ENCODE measurements at regions of chr2 and their contacts with region 1.

Region 1: GRCh38 chr2:175871331-175872004 is 130.6 kb downstream of the LNPK start:
- DNase-seq: no peak
- ATAC-seq: no peak
- H3K4me3 ChIP-seq: no peak overlapping the region
- H3K27ac ChIP-seq: peak overlapping the region; percentile 64 to 80
- H3K4me1 ChIP-seq: peaks cover 4 to 8% of the 10 kb centered on the region in 2 donors
- H3K27me3 ChIP-seq: no peaks in the 10 kb centered on the region

Region 2: DNA sequence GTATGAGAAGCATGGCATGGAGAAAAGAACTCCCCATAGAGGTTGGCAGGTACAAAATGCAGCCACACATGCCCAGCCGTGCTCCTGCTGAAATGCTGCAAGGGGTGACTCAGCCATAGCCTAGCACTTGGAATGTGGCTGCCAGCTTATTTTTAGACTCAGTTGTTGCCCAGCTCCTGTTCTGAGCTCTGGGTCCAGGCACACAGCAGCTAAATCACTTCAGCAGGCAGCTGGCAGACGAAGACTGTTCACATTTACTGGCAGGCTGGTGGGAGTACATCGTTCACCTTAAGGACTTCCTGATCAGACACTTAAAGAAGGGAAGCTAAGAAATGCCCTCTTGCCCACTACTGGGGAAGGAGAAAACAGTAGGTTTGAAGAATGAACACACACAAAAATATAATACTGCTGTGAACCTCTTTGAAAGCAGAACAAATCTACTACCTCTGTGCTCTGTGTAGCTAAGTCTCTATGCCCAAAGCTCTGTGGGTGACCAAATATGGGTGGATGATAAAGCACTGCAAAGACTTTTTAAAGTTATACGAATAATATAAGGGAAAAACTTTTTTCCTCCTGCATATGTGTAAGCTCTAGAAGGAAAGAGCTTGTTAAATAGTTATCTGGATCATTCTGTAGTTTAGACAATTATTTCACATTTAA is 15.5 kb before region 1 on chr2:
- intact Hi-C with region 1: loop called in 1 of 2 experiments (anchors 1 kb)
- DNase-seq: peak; percentile 79 to 81
- ATAC-seq: peak; percentile 94
- H3K4me3 ChIP-seq: no peak overlapping the region
- H3K27ac ChIP-seq: peak overlapping the region; percentile 67 to 96
- H3K4me1 ChIP-seq: no peaks in the 10 kb centered on the region
- H3K27me3 ChIP-seq: no peaks in the 10 kb centered on the region

Region 3: GRCh38 chr2:176001916-176002687 is 130.6 kb after region 1 on chr2 and contains the start of gene LNPK:
- intact Hi-C with region 1: loop called in 1 of 2 experiments (anchors 5 kb)
- DNase-seq: peak; percentile 96 to 97
- ATAC-seq: peak; percentile 99
- H3K4me3 ChIP-seq: peak within 1 kb of the TSS; percentile 46 to 74
- H3K27ac ChIP-seq: peak within 1 kb of the TSS; percentile 10
- H3K4me1 ChIP-seq: no peaks in the 10 kb centered on the region
- H3K27me3 ChIP-seq: no peaks in the 10 kb centered on the region
- total RNA-seq, gene LNPK: 34.2 to 40.7 TPM

Region 4: GRCh38 chr2:176432434-176432833 is 561.0 kb after region 1 on chr2:
- intact Hi-C with region 1: no loop called
- DNase-seq: no peak
- ATAC-seq: no peak
- H3K4me3 ChIP-seq: no peak overlapping the region
- H3K27ac ChIP-seq: no peak overlapping the region
- H3K4me1 ChIP-seq: no peaks in the 10 kb centered on the region
- H3K27me3 ChIP-seq: no peaks in the 10 kb centered on the region